ENCODE measurements at regions of chr3 and their contacts with region 1.

Region 1: GRCh38 chr3:192844836-192845525 is 72.7 kb downstream of the MB21D2 start:
- DNase-seq: no peak
- ATAC-seq: no peak
- H3K4me3 ChIP-seq: no peak overlapping the region
- H3K27ac ChIP-seq: peak overlapping the region; percentile 61
- H3K4me1 ChIP-seq: peaks cover 51% of the 10 kb centered on the region
- H3K27me3 ChIP-seq: no peaks in the 10 kb centered on the region
- CTCF ChIP-seq: no peak
- EP300 ChIP-seq: no peak
- POLR2A ChIP-seq: no peak
- RAD21 ChIP-seq: no peak

Region 2: DNA sequence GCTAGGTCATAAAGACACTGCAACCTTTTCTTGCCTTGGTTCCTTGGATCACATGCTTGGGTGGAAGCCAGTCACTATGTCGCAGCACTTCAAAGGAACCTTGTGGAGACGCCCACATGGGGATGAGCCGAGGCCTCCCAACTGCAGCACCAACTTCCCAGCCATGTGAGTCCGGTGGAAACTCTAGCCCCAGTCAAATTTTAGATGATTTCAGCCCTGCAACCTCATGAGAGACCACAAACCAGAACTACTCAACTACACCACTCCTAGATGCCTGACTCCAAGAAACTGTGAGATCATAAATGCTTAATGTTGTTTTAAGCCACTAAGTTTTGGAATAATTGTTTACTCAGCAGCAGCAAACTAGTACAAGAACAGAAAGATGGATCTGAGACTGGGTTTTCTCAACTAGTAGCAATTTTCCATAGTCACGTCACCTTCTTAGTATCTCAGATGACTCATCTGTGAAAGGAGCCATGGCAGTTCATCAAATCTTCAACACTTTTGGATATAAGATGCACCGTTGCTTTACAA is 13.8 kb before region 1 on chr3:
- CTCF ChIA-PET with region 1: interaction called, 17 read pairs
- POLR2A ChIA-PET with region 1: interaction called, 8 read pairs
- RAD21 ChIA-PET with region 1: interaction called, 71 read pairs
- SMC1A ChIA-PET with region 1: interaction called, 59 read pairs
- in situ Hi-C with region 1: no loop called
- intact Hi-C with region 1: loop called (anchors 2 kb)
- DNase-seq: no peak
- ATAC-seq: peak; percentile 53
- H3K4me3 ChIP-seq: peak overlapping the region; percentile 28; the same call in 1 of the 2 replicates
- H3K27ac ChIP-seq: peak overlapping the region; percentile 80
- H3K4me1 ChIP-seq: peaks cover 18% of the 10 kb centered on the region
- H3K27me3 ChIP-seq: no peaks in the 10 kb centered on the region
- CTCF ChIP-seq: no peak
- EP300 ChIP-seq: no peak
- POLR2A ChIP-seq: no peak
- RAD21 ChIP-seq: no peak

Measured in GM12878 (cell line).